ENCODE measurements at regions of chr2 and their contacts with region 1.

Region 1: GRCh38 chr2:73233154-73233931 is at the start of gene PRADC1:
- DNase-seq: peak; percentile 85 to 97 (median 94)
- ATAC-seq: peak; percentile 77
- H3K4me3 ChIP-seq: peak within 1 kb of the TSS; percentile 80 to 98
- H3K4me3 Mint-ChIP-seq: peak within 1 kb of the TSS; percentile 97
- H3K27ac ChIP-seq: peak within 1 kb of the TSS; percentile 82 to 89
- H3K27ac Mint-ChIP-seq: peak within 1 kb of the TSS; percentile 97
- H3K4me1 ChIP-seq: peaks cover 23% of the 10 kb centered on the region
- H3K4me1 Mint-ChIP-seq: peaks cover 43% of the 10 kb centered on the region
- H3K27me3 ChIP-seq: no peaks in the 10 kb centered on the region
- H3K27me3 Mint-ChIP-seq: no peaks in the 10 kb centered on the region
- CTCF ChIP-seq: no peak
- total RNA-seq, gene PRADC1: 2.4 to 3.4 TPM

Region 2: GRCh38 chr2:73176881-73177644 is 56.3 kb before region 1 on chr2:
- CTCF ChIA-PET with region 1: interaction called, 16 read pairs
- POLR2A ChIA-PET with region 1: interaction called, 3 read pairs
- intact Hi-C with region 1: loop called (anchors 1 to 2 kb)
- DNase-seq: peak; percentile 80 to 94 (median 91)
- ATAC-seq: peak; percentile 92
- H3K4me3 ChIP-seq: peak overlapping the region; percentile 65
- H3K4me3 Mint-ChIP-seq: peak overlapping the region; percentile 89
- H3K27ac ChIP-seq: no peak overlapping the region
- H3K27ac Mint-ChIP-seq: no peak overlapping the region
- H3K4me1 ChIP-seq: peaks cover 26% of the 10 kb centered on the region
- H3K4me1 Mint-ChIP-seq: peaks cover 14% of the 10 kb centered on the region
- H3K27me3 ChIP-seq: peaks cover 6 to 11% of the 10 kb centered on the region in 2 experiments
- H3K27me3 Mint-ChIP-seq: peaks cover 20% of the 10 kb centered on the region
- CTCF ChIP-seq: peak; percentile 92

Region 3: DNA sequence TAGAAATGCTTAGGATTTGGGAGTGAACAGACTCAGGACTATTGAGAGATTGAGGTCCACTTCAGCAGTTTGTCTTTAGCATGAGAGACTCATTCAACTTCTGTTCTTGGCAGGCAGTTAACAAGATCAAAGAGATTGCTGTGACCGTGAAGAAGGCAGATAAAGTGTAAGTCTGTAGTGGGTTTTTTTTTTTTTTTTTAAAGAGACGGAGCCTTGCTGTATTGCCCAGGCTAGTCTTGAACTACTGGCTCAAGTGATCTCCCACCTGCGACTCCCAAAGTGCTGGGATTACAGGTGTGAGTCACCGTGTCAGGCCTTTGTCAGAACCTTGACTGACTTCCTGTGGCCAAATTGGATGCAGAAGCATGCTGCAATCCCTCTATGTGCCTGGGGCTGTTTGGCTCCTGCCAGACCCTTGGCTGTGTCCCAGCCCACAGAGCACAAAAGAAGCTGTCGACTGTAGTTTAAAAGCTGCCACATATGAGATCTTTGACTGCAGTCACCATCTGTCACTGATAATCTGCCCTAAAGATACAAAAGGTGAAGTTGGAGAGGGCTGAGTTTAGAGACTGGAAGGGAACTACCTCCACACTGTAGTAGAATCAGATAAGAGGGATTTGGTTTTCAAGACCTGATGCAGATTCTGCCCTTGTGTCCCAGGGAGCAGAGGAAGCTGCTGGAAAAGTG is 10.7 kb after region 1 on chr2:
- CTCF ChIA-PET with region 1: interaction called, 4 read pairs
- POLR2A ChIA-PET with region 1: interaction called, 11 read pairs
- intact Hi-C with region 1: no loop called
- DNase-seq: no peak
- ATAC-seq: no peak
- H3K4me3 ChIP-seq: no peak overlapping the region
- H3K4me3 Mint-ChIP-seq: no peak overlapping the region
- H3K27ac ChIP-seq: no peak overlapping the region
- H3K27ac Mint-ChIP-seq: peak overlapping the region; percentile 61
- H3K4me1 ChIP-seq: no peaks in the 10 kb centered on the region
- H3K4me1 Mint-ChIP-seq: peaks cover 12% of the 10 kb centered on the region
- H3K27me3 ChIP-seq: no peaks in the 10 kb centered on the region
- H3K27me3 Mint-ChIP-seq: no peaks in the 10 kb centered on the region
- CTCF ChIP-seq: no peak

Region 4: DNA sequence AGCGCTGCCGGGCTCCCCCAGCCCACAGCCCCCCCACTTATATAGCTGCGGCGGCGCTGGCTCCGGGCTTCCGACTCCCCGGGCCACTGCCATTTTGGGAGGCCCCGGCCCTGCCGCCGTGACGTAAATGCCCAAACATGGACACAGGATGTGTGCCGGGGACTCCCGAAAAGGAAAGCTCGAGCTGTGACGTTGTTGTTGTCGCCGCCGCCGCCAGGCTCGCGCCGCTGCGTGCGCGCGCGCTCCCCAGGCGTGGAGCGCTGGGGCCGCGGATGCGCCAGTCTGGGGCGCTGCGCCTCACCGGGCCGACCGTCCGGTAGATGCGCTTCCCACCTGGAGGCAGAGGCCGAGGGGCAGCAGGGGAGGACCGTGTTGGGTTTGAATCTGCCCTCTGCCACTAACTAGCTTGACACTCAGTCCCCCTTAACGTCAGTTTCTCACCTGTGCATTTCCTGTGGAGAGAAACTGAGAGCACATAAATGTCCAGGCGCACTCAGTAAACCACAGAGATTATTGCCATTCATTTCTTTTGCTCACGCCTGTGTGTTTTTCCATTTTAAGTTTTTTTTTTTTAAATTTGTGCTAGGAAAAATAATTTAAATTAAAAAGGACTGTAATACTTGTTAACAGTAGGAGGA is 60.3 kb after region 1 on chr2 and contains the start of gene EGR4:
- CTCF ChIA-PET with region 1: interaction called, 12 read pairs
- POLR2A ChIA-PET with region 1: interaction called, 16 read pairs
- intact Hi-C with region 1: loop called (anchors 1 to 2 kb)
- DNase-seq: peak; percentile 74 to 96 (median 84)
- ATAC-seq: peak; percentile 92
- H3K4me3 ChIP-seq: peak within 1 kb of the TSS; percentile 51 to 73
- H3K4me3 Mint-ChIP-seq: peak within 1 kb of the TSS; percentile 78
- H3K27ac ChIP-seq: no peak within 1 kb of the TSS
- H3K27ac Mint-ChIP-seq: no peak within 1 kb of the TSS
- H3K4me1 ChIP-seq: peaks cover 26% of the 10 kb centered on the region
- H3K4me1 Mint-ChIP-seq: peaks cover 14% of the 10 kb centered on the region
- H3K27me3 ChIP-seq: peaks cover 35 to 37% of the 10 kb centered on the region in 2 experiments
- H3K27me3 Mint-ChIP-seq: peaks cover 62% of the 10 kb centered on the region
- CTCF ChIP-seq: no peak
- total RNA-seq, gene EGR4: 0.14 to 0.22 TPM

Region 5: DNA sequence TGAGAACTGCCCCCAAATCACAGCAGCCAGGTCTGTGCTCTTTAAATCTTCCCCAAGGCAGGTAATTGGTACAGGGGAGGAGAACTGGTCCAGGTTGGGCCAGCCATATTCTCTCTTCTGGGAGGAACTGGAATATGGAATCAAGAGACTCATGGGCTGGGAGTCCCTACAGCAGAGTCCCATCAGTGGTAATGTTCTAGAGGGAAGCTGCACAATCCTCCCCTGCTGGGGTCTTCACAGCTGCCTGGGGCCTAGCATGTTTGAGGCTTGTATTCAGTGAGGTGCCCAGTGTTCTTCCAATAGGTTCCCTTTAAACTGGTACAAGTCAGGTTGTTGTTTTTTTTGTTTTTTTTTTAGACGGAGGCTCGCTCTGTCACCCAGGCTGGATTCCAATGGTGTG is 81.1 kb after region 1 on chr2:
- CTCF ChIA-PET with region 1: no interaction called
- POLR2A ChIA-PET with region 1: no interaction called
- intact Hi-C with region 1: no loop called
- DNase-seq: no peak
- ATAC-seq: no peak
- H3K4me3 ChIP-seq: no peak overlapping the region
- H3K4me3 Mint-ChIP-seq: no peak overlapping the region
- H3K27ac ChIP-seq: no peak overlapping the region
- H3K27ac Mint-ChIP-seq: no peak overlapping the region
- H3K4me1 ChIP-seq: no peaks in the 10 kb centered on the region
- H3K4me1 Mint-ChIP-seq: no peaks in the 10 kb centered on the region
- H3K27me3 ChIP-seq: peaks cover 0 to 3% of the 10 kb centered on the region in 2 experiments
- H3K27me3 Mint-ChIP-seq: peaks cover 16% of the 10 kb centered on the region
- CTCF ChIP-seq: no peak

Region 6: GRCh38 chr2:74198461-74199274 is 965.3 kb after region 1 on chr2 and contains the start of gene MTHFD2:
- CTCF ChIA-PET with region 1: no interaction called
- POLR2A ChIA-PET with region 1: interaction called, 3 read pairs
- intact Hi-C with region 1: loop called in 1 of 2 experiments (anchors 5 kb)
- DNase-seq: peak; percentile 74 to 93 (median 88)
- ATAC-seq: peak; percentile 82
- H3K4me3 ChIP-seq: peak within 1 kb of the TSS; percentile 78 to 86
- H3K4me3 Mint-ChIP-seq: peak within 1 kb of the TSS; percentile 98
- H3K27ac ChIP-seq: peak within 1 kb of the TSS; percentile 87 to 89
- H3K27ac Mint-ChIP-seq: peak within 1 kb of the TSS; percentile 99
- H3K4me1 ChIP-seq: peaks cover 17% of the 10 kb centered on the region
- H3K4me1 Mint-ChIP-seq: peaks cover 25% of the 10 kb centered on the region
- H3K27me3 ChIP-seq: no peaks in the 10 kb centered on the region
- H3K27me3 Mint-ChIP-seq: no peaks in the 10 kb centered on the region
- CTCF ChIP-seq: peak; percentile 77
- total RNA-seq, gene MTHFD2: 25.8 to 26.7 TPM

Region 7: DNA sequence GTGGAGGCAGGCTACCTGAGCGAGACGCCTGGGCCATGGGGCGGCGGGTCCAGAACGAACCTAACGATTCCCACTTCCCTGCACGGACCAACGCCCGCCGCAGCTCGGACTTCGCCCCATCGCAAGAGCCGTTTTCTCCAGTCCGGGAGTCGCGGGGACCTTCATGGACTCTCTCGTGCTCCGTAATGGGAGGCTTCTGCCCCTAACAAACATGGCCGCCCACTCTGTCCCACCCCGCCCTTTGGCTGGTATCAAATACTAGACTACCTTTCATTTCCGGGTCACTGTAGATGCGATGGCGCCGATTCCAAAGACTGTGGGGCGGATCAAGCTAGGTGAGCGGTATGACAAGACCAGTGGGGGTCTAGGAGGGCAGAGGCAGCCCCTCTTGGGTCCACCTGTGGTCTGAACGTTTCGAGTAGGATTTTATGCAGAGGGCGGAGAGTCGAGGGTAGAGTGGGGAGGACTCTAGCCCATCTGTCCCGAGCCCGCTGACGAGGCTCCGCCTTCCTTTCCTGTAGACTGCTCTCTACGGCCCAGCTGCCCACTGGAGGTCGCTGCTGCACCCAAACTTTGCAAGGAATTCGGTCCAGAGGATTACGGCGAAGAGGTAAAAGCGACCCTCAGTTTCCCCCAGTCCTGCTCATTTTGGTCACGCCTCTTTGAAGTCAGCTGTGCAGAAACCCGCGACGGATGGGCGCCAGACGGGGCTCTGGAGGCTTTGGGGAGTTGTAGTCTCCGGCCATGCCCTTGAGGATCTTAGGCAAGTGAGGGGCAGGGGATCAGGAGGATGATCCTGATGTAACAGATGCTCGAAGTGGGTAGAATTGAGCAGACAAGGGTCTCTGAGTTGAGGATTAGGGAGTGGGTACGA is 1249.7 kb after region 1 on chr2 and contains the starts of genes CCDC142 and TTC31:
- CTCF ChIA-PET with region 1: no interaction called
- POLR2A ChIA-PET with region 1: no interaction called
- intact Hi-C with region 1: loop called in 1 of 2 experiments (anchors 5 kb)
- DNase-seq: peak; percentile 85 to 97 (median 94)
- ATAC-seq: peak; percentile 93
- H3K4me3 ChIP-seq: peak within 1 kb of the TSS; percentile 81 to 97
- H3K4me3 Mint-ChIP-seq: peak within 1 kb of the TSS; percentile 97
- H3K27ac ChIP-seq: peak within 1 kb of the TSS; percentile 88 to 90
- H3K27ac Mint-ChIP-seq: peak within 1 kb of the TSS; percentile 99
- H3K4me1 ChIP-seq: peaks cover 25% of the 10 kb centered on the region
- H3K4me1 Mint-ChIP-seq: peaks cover 42% of the 10 kb centered on the region
- H3K27me3 ChIP-seq: no peaks in the 10 kb centered on the region
- H3K27me3 Mint-ChIP-seq: no peaks in the 10 kb centered on the region
- CTCF ChIP-seq: peak; percentile 74
- total RNA-seq, gene CCDC142: 12.6 to 13.6 TPM
- total RNA-seq, gene TTC31: 25.9 to 30.8 TPM